ENCODE measurements at regions of chr18 and their contacts with region 1.

Region 1: GRCh38 chr18:3703732-3704176 is 253.8 kb downstream of the TGIF1 start:
- H3K4me3 Mint-ChIP-seq: no peak overlapping the region
- H3K27ac Mint-ChIP-seq: peak overlapping the region; percentile 58
- H3K4me1 Mint-ChIP-seq: peaks cover 53% of the 10 kb centered on the region
- H3K27me3 Mint-ChIP-seq: peaks cover 4% of the 10 kb centered on the region

Region 2: GRCh38 chr18:2147476-2148230 is 1556.1 kb before region 1 on chr18:
- intact Hi-C with region 1: no loop called
- H3K4me3 Mint-ChIP-seq: no peak overlapping the region
- H3K27ac Mint-ChIP-seq: no peak overlapping the region
- H3K4me1 Mint-ChIP-seq: no peaks in the 10 kb centered on the region
- H3K27me3 Mint-ChIP-seq: no peaks in the 10 kb centered on the region

Region 3: GRCh38 chr18:3151399-3152264 is 552.1 kb before region 1 on chr18:
- intact Hi-C with region 1: no loop called
- H3K4me3 Mint-ChIP-seq: no peak overlapping the region
- H3K27ac Mint-ChIP-seq: no peak overlapping the region
- H3K4me1 Mint-ChIP-seq: peaks cover 7% of the 10 kb centered on the region
- H3K27me3 Mint-ChIP-seq: no peaks in the 10 kb centered on the region

Region 4: GRCh38 chr18:3726238-3726951 is 22.6 kb after region 1 on chr18:
- intact Hi-C with region 1: loop called (anchors 1 kb)
- H3K4me3 Mint-ChIP-seq: no peak overlapping the region
- H3K27ac Mint-ChIP-seq: peak overlapping the region; percentile 79
- H3K4me1 Mint-ChIP-seq: peaks cover 58% of the 10 kb centered on the region
- H3K27me3 Mint-ChIP-seq: peaks cover 1% of the 10 kb centered on the region

Region 5: GRCh38 chr18:3771121-3771971 is 67.6 kb after region 1 on chr18:
- intact Hi-C with region 1: loop called (anchors 5 kb)
- H3K4me3 Mint-ChIP-seq: peak overlapping the region; percentile 80
- H3K27ac Mint-ChIP-seq: peak overlapping the region; percentile 40
- H3K4me1 Mint-ChIP-seq: peaks cover 14% of the 10 kb centered on the region
- H3K27me3 Mint-ChIP-seq: peaks cover 5% of the 10 kb centered on the region

Region 6: DNA sequence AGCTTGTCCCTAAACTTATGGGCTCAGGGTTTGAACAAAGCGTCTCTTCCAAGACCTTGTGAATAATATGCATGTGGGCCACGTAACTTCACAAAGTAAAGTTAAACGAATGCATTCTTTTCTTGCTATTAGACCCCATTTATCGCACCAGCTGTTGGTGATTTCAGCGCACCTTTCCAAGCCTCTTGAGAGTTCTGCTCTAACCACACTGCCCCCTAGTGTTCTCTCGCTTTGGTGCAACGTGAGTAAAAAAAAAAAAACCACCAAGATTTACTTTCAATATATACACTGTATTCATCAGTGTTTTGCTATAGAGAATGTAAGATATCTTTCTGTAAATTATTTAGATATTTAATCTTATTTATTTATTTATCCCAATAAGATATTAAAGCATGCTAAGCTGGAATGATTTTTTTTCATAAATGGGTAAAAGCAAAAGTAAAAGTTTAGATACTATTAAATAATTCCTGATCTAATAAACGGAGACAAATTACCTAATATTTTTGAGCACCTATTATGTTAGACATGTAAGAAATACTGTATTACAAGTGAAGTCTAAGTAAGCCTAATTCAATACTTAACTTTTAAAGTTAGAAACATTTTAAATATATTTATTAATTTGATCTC is 291.8 kb after region 1 on chr18:
- intact Hi-C with region 1: loop called (anchors 5 kb)
- H3K4me3 Mint-ChIP-seq: no peak overlapping the region
- H3K27ac Mint-ChIP-seq: no peak overlapping the region
- H3K4me1 Mint-ChIP-seq: no peaks in the 10 kb centered on the region
- H3K27me3 Mint-ChIP-seq: peaks cover 2% of the 10 kb centered on the region

Region 7: DNA sequence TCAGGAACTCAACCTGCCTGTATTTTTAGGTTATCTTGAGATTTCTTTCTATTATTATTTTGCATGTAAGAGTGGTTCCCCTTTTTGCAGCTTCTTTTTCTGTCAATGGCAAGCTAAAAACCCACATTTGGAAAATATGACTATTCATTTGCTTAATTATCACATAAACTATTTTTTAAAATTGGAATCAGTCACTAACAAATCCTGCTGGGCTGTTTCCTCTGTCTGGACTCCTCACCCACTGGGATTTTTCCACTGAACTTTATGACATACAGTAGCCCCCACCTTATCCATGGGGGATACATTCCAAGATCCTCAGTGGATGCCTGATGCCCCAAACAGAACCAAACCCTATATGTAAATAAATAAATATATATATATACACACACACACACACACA is 304.1 kb after region 1 on chr18:
- intact Hi-C with region 1: no loop called
- H3K4me3 Mint-ChIP-seq: no peak overlapping the region
- H3K27ac Mint-ChIP-seq: no peak overlapping the region
- H3K4me1 Mint-ChIP-seq: no peaks in the 10 kb centered on the region
- H3K27me3 Mint-ChIP-seq: peaks cover 8% of the 10 kb centered on the region

Measured in dendritic cell treated with granulocyte-macrophage colony-stimulating factor and Interleukin-4, amounts not matched to agents 40 ng/mL and 50 ng/mL, for 4 days (primary cell).